MCF 10A (cell line): ENCODE measurements at regions of chr7 and their contacts with region 1.

Region 1: GRCh38 chr7:82481499-82482097 is 38.0 kb upstream of the CACNA2D1 start:
- DNase-seq: peak; percentile 26
- H3K4me3 Mint-ChIP-seq: no peak overlapping the region
- H3K27ac Mint-ChIP-seq: no peak overlapping the region
- H3K4me1 Mint-ChIP-seq: no peaks in the 10 kb centered on the region
- H3K27me3 Mint-ChIP-seq: peaks cover 20% of the 10 kb centered on the region
- CTCF ChIP-seq: peak; percentile 59

Region 2: DNA sequence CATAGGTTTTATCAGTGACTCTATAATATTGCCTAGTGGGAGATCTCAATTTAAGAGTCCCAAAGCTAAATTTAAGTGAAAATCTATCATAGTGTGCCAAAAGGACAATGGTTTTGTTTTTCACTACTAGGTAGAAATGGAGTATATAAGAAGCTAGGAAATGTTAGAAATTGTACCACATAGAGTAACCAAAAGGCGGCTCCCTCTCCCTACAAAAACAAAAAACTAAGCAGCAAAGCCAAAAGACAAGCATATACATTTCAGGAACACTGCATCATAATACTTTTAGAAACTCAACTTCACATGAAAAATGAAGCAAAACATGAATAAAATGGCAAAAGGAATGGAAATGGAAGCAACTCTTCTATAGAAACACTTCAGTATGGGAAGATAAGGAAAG is 309.6 kb before region 1 on chr7:
- CTCF ChIA-PET with region 1: interaction called, 4 read pairs
- POLR2A ChIA-PET with region 1: no interaction called
- intact Hi-C with region 1: loop called (anchors 5 kb)
- DNase-seq: no peak
- H3K4me3 Mint-ChIP-seq: no peak overlapping the region
- H3K27ac Mint-ChIP-seq: no peak overlapping the region
- H3K4me1 Mint-ChIP-seq: no peaks in the 10 kb centered on the region
- H3K27me3 Mint-ChIP-seq: peaks cover 50% of the 10 kb centered on the region
- CTCF ChIP-seq: peak; percentile 26

Region 3: DNA sequence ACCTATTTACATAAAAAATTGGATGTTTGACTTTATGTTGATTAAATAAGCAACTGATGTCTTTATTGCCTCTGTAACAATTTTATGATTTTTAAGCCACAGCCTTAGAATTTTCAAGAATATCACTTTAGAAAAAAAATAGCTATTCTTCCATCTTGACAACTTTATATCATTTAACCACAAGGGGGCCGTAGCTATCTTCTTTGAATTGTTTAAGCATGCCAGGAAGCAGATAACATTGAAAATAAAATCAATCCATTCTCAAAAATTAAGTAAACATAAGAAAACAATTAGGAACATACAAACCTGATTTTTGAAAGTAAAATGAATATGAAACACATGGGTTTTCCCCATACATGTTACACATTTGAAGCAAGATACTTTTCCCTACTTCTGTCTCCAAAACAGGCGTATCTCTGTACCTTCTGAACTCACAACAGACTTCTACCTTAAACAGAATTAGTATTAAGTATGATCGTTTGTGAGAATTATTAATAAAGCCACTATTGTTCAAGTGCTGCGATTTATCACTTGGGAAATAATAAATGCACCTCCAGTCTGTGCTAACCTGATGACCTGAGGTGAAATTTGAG is 247.0 kb before region 1 on chr7:
- CTCF ChIA-PET with region 1: no interaction called
- POLR2A ChIA-PET with region 1: no interaction called
- intact Hi-C with region 1: loop called (anchors 5 kb)
- DNase-seq: peak; percentile 49
- H3K4me3 Mint-ChIP-seq: no peak overlapping the region
- H3K27ac Mint-ChIP-seq: no peak overlapping the region
- H3K4me1 Mint-ChIP-seq: no peaks in the 10 kb centered on the region
- H3K27me3 Mint-ChIP-seq: peaks cover 92% of the 10 kb centered on the region
- CTCF ChIP-seq: peak; percentile 36

Region 4: DNA sequence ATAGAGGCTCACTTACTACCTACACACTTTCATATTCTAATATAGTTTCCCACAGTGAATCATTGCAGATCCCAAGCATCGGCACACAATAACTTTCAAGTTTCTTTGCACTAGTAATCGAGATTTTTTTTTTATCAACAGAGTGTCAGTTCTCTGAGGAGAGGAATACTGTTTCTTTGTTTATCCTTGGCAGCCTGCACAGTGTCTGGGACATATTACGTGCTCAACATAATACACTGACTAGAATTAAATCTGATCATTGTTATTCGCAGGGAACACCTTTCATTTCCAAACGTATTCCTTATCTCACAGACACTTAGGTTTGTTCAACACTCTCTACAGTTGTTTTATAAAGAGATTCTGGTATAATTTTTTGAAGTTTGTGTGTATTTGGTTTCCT is 133.3 kb before region 1 on chr7:
- CTCF ChIA-PET with region 1: no interaction called
- POLR2A ChIA-PET with region 1: no interaction called
- intact Hi-C with region 1: no loop called
- DNase-seq: no peak
- H3K4me3 Mint-ChIP-seq: no peak overlapping the region
- H3K27ac Mint-ChIP-seq: no peak overlapping the region
- H3K4me1 Mint-ChIP-seq: no peaks in the 10 kb centered on the region
- H3K27me3 Mint-ChIP-seq: peaks cover 34% of the 10 kb centered on the region
- CTCF ChIP-seq: no peak